ENCODE measurements at regions of chr7 and their contacts with region 1.

Region 1: DNA sequence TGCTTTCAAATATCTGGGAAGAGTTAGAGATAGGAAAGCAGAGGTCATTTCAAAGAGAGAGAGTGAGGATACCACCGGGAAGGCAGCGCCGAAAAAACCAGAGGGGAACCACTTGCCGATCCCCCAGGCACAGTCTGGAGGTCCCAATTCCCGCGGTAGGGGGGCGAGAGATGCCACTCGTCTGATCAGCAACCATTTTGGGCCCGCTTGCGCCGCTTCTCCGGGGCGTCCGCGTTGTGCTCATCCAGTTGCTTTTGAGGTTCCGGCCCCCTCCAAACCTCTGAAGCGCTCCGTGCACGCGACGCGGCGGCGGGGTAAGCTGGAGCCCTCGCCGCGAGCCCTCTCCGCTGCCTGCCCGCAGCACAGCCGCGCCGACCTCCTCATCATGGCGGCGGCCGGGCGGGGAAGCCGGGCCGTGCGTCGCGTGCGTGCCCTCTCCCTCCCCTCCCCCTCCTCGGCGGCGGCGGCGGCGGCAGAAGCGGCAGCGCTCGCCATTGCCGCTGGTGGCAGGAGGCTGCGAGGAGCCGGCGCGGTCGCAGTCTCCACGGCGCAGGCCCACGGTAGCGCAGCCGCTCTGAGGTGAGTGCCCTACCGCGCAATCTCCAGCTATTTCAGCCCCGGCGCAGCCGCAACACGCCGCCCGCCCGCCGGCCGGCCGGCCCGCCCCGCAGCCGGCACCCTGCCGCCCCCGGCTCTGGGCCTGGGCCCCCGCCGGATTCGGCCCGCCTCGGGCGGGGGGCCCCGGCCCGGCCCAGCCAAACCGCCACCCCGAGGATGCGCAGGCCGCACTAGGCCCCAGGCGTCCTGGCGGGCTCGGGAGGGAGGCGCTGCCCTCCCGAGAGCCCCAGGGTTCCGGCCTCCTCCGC is at the start of gene NRF1:
- DNase-seq: peak; percentile 41
- H3K4me3 ChIP-seq: peak within 1 kb of the TSS; percentile 62
- H3K27me3 ChIP-seq: no peaks in the 10 kb centered on the region
- CTCF ChIP-seq: no peak
- polyA plus RNA-seq, gene NRF1: 13.0 and 13.3 TPM in 2 replicates

Region 2: GRCh38 chr7:129597672-129598071 is 13.8 kb before region 1 on chr7:
- CTCF ChIA-PET with region 1: interaction called, 16 read pairs
- POLR2A ChIA-PET with region 1: no interaction called
- DNase-seq: no peak
- H3K4me3 ChIP-seq: no peak overlapping the region
- H3K27me3 ChIP-seq: no peaks in the 10 kb centered on the region
- CTCF ChIP-seq: no peak

Region 3: DNA sequence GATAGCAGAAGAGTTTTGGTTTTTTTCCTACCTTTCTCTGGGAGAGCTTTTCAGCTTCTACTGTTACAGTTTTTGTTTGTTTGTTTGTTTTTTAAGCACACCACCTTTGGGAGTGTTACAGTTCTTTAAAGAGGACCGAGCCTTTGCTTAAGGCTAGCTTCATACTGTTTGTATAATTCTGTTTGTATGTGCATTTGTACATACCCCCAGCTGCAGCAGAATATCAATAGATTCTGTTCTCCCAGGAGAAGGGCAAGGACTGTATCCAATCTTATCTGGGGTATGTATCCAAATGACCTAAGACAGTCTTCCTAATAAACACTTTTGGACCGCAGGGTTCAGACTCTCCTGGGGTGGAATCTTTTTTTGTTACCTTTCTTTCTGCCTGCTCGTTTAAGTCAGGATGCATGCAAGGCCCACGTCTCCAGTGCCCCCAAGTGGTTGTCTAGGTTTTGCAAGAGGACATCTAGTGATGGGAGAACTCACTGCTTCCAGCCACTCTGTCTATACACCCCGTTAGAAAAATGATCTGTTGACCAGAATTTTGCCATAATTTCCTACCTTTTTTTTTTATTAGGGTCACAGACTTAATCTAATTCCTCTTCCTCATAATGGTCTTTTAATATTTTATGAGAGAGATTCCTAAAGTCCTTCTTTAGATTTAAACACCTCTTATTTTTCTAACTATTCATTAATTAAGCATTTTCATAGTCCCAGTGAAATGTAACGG is 24.0 kb after region 1 on chr7:
- CTCF ChIA-PET with region 1: interaction called, 12 read pairs
- POLR2A ChIA-PET with region 1: no interaction called
- DNase-seq: no peak
- H3K4me3 ChIP-seq: no peak overlapping the region
- H3K27me3 ChIP-seq: no peaks in the 10 kb centered on the region
- CTCF ChIP-seq: peak; percentile 93

Region 4: GRCh38 chr7:129664029-129665012 is 52.8 kb after region 1 on chr7:
- CTCF ChIA-PET with region 1: no interaction called
- POLR2A ChIA-PET with region 1: no interaction called
- DNase-seq: peak; percentile 28
- H3K4me3 ChIP-seq: no peak overlapping the region
- H3K27me3 ChIP-seq: no peaks in the 10 kb centered on the region
- CTCF ChIP-seq: peak; percentile 61